Heart left ventricle (tissue), 16 donors: ENCODE measurements at regions of chr19 and their contacts with region 1.

Region 1: GRCh38 chr19:11374433-11375142 is at the start of gene SWSAP1:
- DNase-seq: peak; percentile 99
- ATAC-seq: peak; percentile 96 to 98 (median 98)
- H3K4me3 ChIP-seq: peak within 1 kb of the TSS; percentile 25 to 90 (median 70)
- H3K27ac ChIP-seq: peak within 1 kb of the TSS; percentile 92 to 100 (median 96)
- H3K4me1 ChIP-seq: peaks cover 7 to 48% (median 21%) of the 10 kb centered on the region in 12 donors
- H3K27me3 ChIP-seq: no peaks in the 10 kb centered on the region
- CTCF ChIP-seq: no peak
- POLR2A ChIP-seq: no peak
- total RNA-seq, gene SWSAP1: 0.67 to 1.9 (median 1.5) TPM

Region 2: GRCh38 chr19:11281356-11282049 is 93.1 kb before region 1 on chr19:
- intact Hi-C with region 1: no loop called
- DNase-seq: no peak
- ATAC-seq: no peak
- H3K4me3 ChIP-seq: no peak overlapping the region
- H3K27ac ChIP-seq: no peak overlapping the region
- H3K4me1 ChIP-seq: peaks cover 0 to 29% (median 12%) of the 10 kb centered on the region in 12 donors
- H3K27me3 ChIP-seq: peaks cover 0 to 13% (median 0%) of the 10 kb centered on the region in 9 donors
- CTCF ChIP-seq: no peak
- POLR2A ChIP-seq: no peak

Region 3: GRCh38 chr19:11346092-11346940 is 28.3 kb before region 1 on chr19 and contains the starts of genes CCDC159 and TMEM205:
- intact Hi-C with region 1: loop called in 1 of 10 experiments (anchors 1 kb)
- DNase-seq: peak; percentile 98 to 99 (median 99)
- ATAC-seq: peak; percentile 92 to 98 (median 97)
- H3K4me3 ChIP-seq: peak within 1 kb of the TSS; percentile 42 to 87 (median 78)
- H3K27ac ChIP-seq: peak within 1 kb of the TSS; percentile 48 to 92 (median 84)
- H3K4me1 ChIP-seq: peaks cover 0 to 32% (median 22%) of the 10 kb centered on the region in 12 donors
- H3K27me3 ChIP-seq: no peaks in the 10 kb centered on the region
- CTCF ChIP-seq: peak in 5 of 12 donors; percentile 12 to 37 (median 25)
- POLR2A ChIP-seq: peak; percentile 17 to 94
- total RNA-seq, gene CCDC159: 13.6 to 26.2 (median 21.9) TPM
- total RNA-seq, gene TMEM205: 68.3 to 372 (median 83.9) TPM

Region 4: DNA sequence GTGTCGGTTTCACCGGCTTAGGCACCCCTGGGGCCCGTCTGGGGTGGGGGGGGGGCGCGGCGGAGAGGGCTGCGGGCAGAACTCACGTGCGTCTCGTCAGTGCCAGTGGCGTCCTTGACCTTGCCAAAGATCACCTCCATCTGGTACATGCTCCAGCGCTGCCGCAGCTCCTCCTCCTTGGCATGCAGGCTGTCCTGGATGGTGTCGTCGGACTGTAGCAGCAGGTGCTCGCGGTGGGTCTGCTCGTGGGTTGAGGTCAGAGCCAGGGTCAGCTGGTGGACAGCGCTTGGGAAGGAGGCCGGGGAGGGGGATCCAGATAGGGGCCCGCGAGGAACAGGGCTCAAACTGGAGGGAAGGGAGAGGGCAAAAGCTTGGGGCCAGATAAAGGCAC is 49.2 kb after region 1 on chr19:
- intact Hi-C with region 1: no loop called
- DNase-seq: peak in 1 of 5 donors; percentile 24
- ATAC-seq: no peak
- H3K4me3 ChIP-seq: no peak overlapping the region
- H3K27ac ChIP-seq: no peak overlapping the region
- H3K4me1 ChIP-seq: peaks cover 4 to 42% (median 28%) of the 10 kb centered on the region in 12 donors
- H3K27me3 ChIP-seq: peaks cover 4 to 55% (median 38%) of the 10 kb centered on the region in 9 donors
- CTCF ChIP-seq: no peak
- POLR2A ChIP-seq: no peak

Region 5: GRCh38 chr19:11435058-11435832 is 60.7 kb after region 1 on chr19 and contains the starts of genes ODAD3 and PRKCSH:
- intact Hi-C with region 1: loop called in 4 of 10 experiments (anchors 2 to 5 kb)
- DNase-seq: peak; percentile 99
- ATAC-seq: peak; percentile 98 to 99 (median 98)
- H3K4me3 ChIP-seq: peak within 1 kb of the TSS; percentile 64 to 90 (median 80)
- H3K27ac ChIP-seq: peak within 1 kb of the TSS in 11 of 12 donors; percentile 73 to 86 (median 81)
- H3K4me1 ChIP-seq: peaks cover 0 to 22% (median 17%) of the 10 kb centered on the region in 12 donors
- H3K27me3 ChIP-seq: no peaks in the 10 kb centered on the region
- CTCF ChIP-seq: peak; percentile 69 to 90 (median 87)
- POLR2A ChIP-seq: peak in 1 of 2 donors; percentile 53
- total RNA-seq, gene ODAD3: 0.18 to 0.69 (median 0.31) TPM in 7 of 9 donors, not detected in the others
- total RNA-seq, gene PRKCSH: 69.3 to 210 (median 120) TPM

Region 6: GRCh38 chr19:11446652-11447301 is 72.2 kb after region 1 on chr19:
- intact Hi-C with region 1: loop called in 1 of 10 experiments (anchors 5 kb)
- DNase-seq: peak; percentile 41 to 84 (median 50)
- ATAC-seq: peak; percentile 33 to 78 (median 70)
- H3K4me3 ChIP-seq: no peak overlapping the region
- H3K27ac ChIP-seq: no peak overlapping the region
- H3K4me1 ChIP-seq: peaks cover 0 to 8% (median 0%) of the 10 kb centered on the region in 12 donors
- H3K27me3 ChIP-seq: peaks cover 0 to 3% (median 0%) of the 10 kb centered on the region in 9 donors
- CTCF ChIP-seq: peak; percentile 56 to 82 (median 70)
- POLR2A ChIP-seq: no peak

Region 7: DNA sequence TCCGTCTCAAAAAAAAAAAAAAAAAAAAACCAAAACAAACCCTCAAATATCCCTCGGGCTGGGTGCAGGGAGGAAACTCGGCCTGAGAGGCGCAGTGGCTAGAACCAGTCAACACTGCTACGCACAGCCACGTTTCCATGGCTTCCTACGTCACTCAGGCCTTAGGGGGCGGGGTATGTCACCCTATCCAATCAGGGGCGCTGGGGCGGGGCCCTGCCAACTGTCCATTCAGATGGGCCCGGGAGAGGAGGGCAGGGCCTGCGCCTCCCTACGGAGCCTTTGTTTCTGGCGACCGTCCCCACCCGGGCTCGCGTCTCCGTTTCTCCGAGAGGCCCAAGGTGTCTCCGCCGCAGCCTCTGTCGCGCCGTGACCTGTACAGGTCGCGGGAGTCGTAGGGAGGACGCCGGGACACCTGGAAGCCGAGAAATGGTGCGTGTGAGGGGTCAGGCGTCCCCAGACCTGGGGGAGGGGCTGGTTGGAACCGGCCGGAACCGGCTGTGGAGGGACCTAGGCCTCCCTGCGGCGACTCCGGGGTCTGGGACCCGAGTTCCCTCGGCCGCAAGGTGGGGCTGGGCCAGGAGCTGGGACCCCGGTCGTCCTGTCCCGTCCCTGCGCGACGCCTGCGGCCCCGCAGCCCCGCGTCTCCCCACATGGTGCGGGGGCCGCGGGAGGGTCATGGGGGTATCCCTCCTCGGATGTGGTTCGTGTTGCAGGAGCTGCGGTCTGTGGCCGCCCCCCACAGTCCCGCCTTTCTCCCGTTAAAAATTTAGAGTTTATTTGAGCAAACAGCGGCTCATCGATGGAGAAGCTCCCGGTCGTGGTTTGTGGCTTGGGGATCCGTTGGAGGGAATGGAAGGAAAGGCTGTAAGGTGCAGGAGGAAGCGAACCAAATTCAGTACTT is 222.9 kb after region 1 on chr19 and contains the start of gene ZNF627:
- intact Hi-C with region 1: loop called in 1 of 10 experiments (anchors 10 kb)
- DNase-seq: peak; percentile 99 to 100 (median 99)
- ATAC-seq: peak; percentile 100
- H3K4me3 ChIP-seq: peak within 1 kb of the TSS; percentile 70 to 99 (median 88)
- H3K27ac ChIP-seq: peak within 1 kb of the TSS; percentile 44 to 95 (median 91)
- H3K4me1 ChIP-seq: peaks cover 0 to 19% (median 12%) of the 10 kb centered on the region in 12 donors
- H3K27me3 ChIP-seq: no peaks in the 10 kb centered on the region
- CTCF ChIP-seq: peak in 6 of 12 donors; percentile 5 to 47 (median 27)
- POLR2A ChIP-seq: peak; percentile 80 to 96
- total RNA-seq, gene ZNF627: 3.5 to 9.2 (median 6.0) TPM